PC-9 (cell line): ENCODE measurements at regions of chr17 and their contacts with region 1.

Region 1: DNA sequence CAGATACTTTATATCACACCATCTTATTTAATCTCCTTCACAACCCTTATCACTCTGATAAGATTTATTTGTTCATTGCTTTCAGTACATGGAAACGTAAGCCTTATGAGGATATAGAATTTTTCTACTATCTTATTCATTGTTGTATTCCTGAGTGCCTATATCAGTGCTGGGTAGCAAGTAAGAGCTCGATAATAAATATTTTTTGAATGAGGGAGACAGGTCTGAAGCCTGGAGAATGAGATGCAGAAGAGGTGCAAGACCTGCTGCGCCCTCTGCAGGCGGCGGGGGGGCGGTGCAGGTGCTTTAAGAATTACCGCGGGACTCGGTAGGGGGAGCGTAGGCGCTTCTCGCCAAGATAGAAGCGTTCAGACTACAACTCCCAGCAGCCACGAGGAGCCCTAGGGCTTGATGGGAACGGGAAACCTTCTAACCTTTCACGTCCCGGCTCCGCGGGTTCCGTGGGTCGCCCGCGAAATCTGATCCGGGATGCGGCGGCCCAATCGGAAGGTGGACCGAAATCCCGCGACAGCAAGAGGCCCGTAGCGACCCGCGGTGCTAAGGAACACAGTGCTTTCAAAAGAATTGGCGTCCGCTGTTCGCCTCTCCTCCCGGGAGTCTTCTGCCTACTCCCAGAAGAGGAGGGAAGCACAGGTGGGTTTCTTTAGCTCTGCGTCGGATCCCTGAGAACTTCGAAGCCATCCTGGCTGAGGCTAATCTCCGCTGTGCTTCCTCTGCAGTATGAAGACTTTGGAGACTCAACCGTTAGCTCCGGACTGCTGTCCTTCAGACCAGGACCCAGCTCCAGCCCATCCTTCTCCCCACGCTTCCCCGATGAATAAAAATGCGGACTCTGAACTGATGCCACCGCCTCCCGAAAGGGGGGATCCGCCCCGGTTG is at the start of gene WRAP53:
- DNase-seq: peak; percentile 93 to 99
- H3K4me3 ChIP-seq: peak within 1 kb of the TSS; percentile 99
- H3K27ac ChIP-seq: peak within 1 kb of the TSS; percentile 96
- H3K4me1 ChIP-seq: peaks cover 10% of the 10 kb centered on the region
- H3K27me3 ChIP-seq: no peaks in the 10 kb centered on the region
- CTCF ChIP-seq: peak; percentile 90
- total RNA-seq, gene WRAP53: 31.9 and 37.2 TPM in 2 replicates

Region 2: DNA sequence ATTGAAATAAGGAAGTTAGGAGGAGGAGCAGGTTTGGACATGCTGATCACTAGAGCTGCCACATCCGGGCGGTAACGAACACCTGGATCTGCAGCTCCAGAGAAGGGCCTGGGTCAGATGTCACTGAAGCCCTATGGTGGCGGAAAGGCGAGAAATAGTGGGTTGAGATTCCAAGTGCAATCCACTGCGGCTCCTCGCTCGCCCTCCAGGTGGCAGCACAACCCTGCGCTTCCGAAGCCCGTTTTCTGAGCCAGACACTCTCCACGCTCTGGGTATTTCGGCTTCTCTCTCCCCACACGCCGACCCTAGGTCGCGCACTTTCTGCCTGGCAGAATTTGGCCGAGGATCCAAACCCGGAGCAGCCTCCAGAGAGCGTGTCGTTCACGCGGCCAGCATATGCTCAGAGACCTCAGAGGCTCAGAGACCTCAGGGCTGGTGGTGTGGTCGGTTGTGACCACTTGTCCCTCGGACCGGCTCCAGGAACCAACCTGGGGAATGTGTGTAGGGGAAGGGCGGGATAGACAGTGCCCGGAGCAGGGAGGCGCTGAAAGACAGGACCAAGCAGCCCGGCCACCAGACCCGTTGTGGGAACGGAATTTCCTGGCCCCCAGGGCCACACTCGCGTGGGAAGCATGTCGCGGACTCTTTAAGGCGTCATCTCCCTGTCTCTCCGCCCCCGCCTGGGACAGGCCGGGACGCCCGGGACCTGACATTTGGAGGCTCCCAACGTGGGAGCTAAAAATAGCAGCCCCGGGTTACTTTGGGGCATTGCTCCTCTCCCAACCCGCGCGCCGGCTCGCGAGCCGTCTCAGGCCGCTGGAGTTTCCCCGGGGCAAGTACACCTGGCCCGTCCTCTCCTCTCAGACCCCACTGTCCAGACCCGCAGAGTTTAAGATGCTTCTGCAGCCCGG is 407.4 kb before region 1 on chr17:
- CTCF ChIA-PET with region 1: interaction called, 20 read pairs
- POLR2A ChIA-PET with region 1: no interaction called
- intact Hi-C with region 1: loop called (anchors 2 kb)
- DNase-seq: peak; percentile 74 to 91
- H3K4me3 ChIP-seq: peak overlapping the region; percentile 55
- H3K27ac ChIP-seq: peak overlapping the region; percentile 62
- H3K4me1 ChIP-seq: 0 out of 2 replicates have a peak, but pooled peaks cover 4% of the 10 kb centered on the region
- H3K27me3 ChIP-seq: no peaks in the 10 kb centered on the region
- CTCF ChIP-seq: peak; percentile 96

Region 3: DNA sequence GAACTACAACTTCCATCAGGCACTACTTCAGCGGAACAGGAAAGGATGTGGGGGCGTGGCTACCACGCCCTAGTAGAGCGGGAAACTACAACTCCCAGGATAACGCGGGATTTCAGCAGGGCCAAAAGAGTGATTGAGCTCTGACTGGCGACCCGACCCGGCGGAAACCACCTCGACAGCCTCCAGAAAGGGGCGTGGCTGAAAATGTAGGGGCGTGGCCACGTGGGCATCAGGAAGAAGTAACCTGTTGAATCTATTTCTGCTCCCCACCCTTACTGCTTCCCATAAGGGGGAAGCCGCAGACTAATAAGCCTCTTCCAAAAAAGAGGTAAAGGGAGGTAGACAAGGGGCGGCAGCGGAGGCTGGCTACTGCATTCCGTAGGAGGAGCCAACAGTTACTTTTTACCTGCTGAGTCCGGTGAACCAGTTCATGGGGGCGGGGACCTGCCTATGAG is 252.9 kb before region 1 on chr17 and contains the start of gene TMEM102:
- CTCF ChIA-PET with region 1: interaction called, 4 read pairs
- POLR2A ChIA-PET with region 1: interaction called, 15 read pairs
- intact Hi-C with region 1: loop called (anchors 1 kb)
- DNase-seq: peak; percentile 92 to 99
- H3K4me3 ChIP-seq: peak within 1 kb of the TSS; percentile 57
- H3K27ac ChIP-seq: peak within 1 kb of the TSS; percentile 68
- H3K4me1 ChIP-seq: 0 out of 2 replicates have a peak, but pooled peaks cover 7% of the 10 kb centered on the region
- H3K27me3 ChIP-seq: no peaks in the 10 kb centered on the region
- CTCF ChIP-seq: no peak
- total RNA-seq, gene TMEM102: 17.0 and 20.7 TPM in 2 replicates

Region 4: DNA sequence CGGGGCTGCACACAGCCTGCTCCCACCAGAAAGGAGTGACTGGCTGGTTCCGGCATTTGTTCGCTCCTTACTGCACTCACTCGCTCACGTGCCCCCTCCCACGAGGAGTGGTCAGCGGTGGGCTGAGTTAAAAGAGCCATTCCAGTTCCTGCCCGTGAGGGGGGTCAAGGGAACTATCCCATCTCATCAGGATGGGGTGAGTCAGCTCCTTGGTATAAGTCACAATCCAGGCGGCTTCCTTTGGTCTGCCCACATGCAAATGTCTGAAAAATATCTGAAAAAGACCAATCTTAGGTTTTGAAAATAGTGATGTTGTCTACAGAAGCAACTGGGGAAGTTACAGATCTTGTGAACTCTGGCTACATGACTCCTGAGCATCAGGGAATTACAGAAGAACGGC is 149.3 kb before region 1 on chr17:
- CTCF ChIA-PET with region 1: interaction called, 12 read pairs
- POLR2A ChIA-PET with region 1: no interaction called
- intact Hi-C with region 1: no loop called
- DNase-seq: no peak
- H3K4me3 ChIP-seq: no peak overlapping the region
- H3K27ac ChIP-seq: no peak overlapping the region
- H3K4me1 ChIP-seq: no peaks in the 10 kb centered on the region
- H3K27me3 ChIP-seq: no peaks in the 10 kb centered on the region
- CTCF ChIP-seq: no peak

Region 5: GRCh38 chr17:7589204-7589868 is 98.8 kb before region 1 on chr17:
- CTCF ChIA-PET with region 1: interaction called, 8 read pairs
- POLR2A ChIA-PET with region 1: interaction called, 14 read pairs
- intact Hi-C with region 1: loop called (anchors 1 kb)
- DNase-seq: peak; percentile 72 to 88
- H3K4me3 ChIP-seq: peak overlapping the region; percentile 83
- H3K27ac ChIP-seq: peak overlapping the region; percentile 97
- H3K4me1 ChIP-seq: peaks cover 39% of the 10 kb centered on the region
- H3K27me3 ChIP-seq: no peaks in the 10 kb centered on the region
- CTCF ChIP-seq: peak; percentile 83

Region 6: DNA sequence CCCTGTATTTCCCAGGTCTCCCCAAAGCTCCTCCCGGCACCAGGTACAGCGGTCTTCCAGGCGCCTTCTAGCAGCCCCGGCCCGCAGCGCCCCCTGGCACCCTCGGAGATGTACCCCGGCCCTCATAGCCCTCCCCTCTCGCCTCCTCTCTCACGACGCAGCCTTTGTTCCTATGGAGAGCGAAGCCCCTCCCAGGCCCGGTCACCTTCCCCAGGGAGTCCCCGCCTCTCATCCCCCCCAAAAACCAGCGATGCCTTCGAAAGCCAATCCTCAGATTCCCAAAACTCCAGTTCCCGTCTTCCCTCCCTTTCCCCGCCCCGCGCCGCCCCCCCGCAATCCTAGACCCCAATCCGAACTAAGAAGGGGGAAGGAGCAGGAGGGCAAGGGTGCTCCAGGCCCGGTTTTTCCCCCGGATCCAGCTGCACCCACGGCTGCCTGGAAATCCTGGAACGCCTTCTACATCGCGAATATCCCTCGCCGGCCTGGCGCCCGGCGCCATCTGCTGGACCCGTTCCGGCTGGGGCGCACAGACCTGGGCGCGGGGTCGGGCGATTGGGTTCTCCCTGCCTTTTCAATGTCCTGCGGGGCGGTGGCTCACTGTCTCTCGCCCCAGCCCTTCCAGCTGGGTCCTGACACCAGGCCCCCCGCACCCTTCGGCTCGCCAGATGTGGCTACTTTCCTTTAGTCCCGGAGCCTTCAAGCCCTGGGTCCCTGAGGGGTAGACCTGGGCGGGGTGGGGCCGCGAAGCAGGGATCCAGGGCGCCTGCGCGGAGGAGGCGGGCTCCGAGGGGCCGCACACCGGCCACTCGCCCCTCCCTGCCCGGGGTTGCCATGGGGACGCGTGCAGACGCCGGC is 29.0 kb after region 1 on chr17 and contains the start of gene DNAH2:
- CTCF ChIA-PET with region 1: interaction called, 3 read pairs
- POLR2A ChIA-PET with region 1: no interaction called
- intact Hi-C with region 1: loop called (anchors 2 kb)
- DNase-seq: peak; percentile 71 to 91
- H3K4me3 ChIP-seq: peak within 1 kb of the TSS; percentile 67
- H3K27ac ChIP-seq: no peak within 1 kb of the TSS
- H3K4me1 ChIP-seq: peaks cover 7% of the 10 kb centered on the region
- H3K27me3 ChIP-seq: no peaks in the 10 kb centered on the region
- CTCF ChIP-seq: peak; percentile 50
- total RNA-seq, gene DNAH2: 10.6 and 11.6 TPM in 2 replicates